ENCODE measurements at regions of chr10 and their contacts with region 1.

Region 1: DNA sequence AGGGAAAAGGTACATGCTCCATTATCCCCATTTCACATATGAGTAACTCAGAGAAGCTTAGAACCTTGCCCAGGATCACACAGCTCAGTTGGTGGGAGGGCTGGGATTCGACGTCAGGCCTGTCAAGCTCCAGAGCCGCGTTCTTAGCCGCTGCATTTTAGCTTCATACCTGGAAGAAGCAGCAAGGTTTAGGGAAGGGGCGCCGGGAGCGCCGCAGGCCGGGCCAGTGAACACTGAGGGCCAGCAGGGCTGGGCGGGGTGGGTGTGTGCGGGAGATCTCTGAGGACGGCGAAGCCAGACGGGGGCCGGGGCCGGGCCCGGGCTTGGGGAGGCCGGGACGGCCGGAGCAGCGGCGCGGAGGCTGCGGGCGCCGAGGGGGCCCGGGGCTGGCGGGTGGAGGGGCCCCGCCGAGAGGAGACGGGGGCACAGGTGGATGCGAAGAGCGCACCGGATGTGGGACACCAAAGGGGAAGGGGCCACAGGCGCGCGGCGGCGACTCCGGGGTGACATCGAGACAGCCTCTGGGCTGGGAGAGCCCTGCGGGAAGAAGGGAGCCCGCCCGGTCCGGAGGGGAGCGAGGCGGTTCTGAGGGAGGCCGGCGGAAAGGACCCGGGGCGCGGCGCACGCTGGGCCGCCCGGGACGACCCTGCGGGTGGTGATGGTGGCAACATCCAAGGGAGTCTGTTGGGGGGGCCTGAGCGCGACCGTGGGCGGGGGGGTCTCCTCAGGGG is 498 bp downstream of the NDST2 start:
- DNase-seq: peak; percentile 63
- H3K4me3 Mint-ChIP-seq: peak overlapping the region; percentile 93
- H3K27ac Mint-ChIP-seq: peak overlapping the region; percentile 99
- H3K4me1 Mint-ChIP-seq: peaks cover 47% of the 10 kb centered on the region
- H3K27me3 Mint-ChIP-seq: no peaks in the 10 kb centered on the region

Region 2: GRCh38 chr10:73252445-73253224 is 558.3 kb before region 1 on chr10 and contains the start of gene MRPS16:
- CTCF ChIA-PET with region 1: no interaction called
- intact Hi-C with region 1: loop called (anchors 2 kb)
- DNase-seq: peak; percentile 97
- H3K4me3 Mint-ChIP-seq: peak within 1 kb of the TSS; percentile 98
- H3K27ac Mint-ChIP-seq: peak within 1 kb of the TSS; percentile 94
- H3K4me1 Mint-ChIP-seq: peaks cover 38% of the 10 kb centered on the region
- H3K27me3 Mint-ChIP-seq: no peaks in the 10 kb centered on the region
- total RNA-seq, gene MRPS16: 140 to 145 TPM

Region 3: DNA sequence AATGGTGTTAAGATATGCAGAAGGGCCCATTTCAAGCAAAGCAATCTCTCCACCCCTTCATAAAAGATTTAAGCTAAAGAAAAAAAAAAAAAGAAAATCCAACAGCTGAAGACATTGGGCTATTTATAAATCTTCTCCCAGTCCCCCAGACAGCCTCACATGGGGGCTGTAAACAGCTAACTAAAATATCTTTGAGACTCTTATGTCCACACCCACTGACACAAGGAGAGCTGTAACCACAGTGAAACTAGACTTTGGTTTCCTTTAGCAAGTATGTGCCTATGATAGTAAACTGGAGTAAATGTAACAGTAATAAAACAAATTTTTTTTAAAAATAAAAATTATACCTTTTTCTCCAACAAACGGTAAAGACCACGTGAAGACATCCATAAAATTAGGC is 343.7 kb before region 1 on chr10:
- CTCF ChIA-PET with region 1: no interaction called
- intact Hi-C with region 1: no loop called
- DNase-seq: no peak
- H3K4me3 Mint-ChIP-seq: no peak overlapping the region
- H3K27ac Mint-ChIP-seq: no peak overlapping the region
- H3K4me1 Mint-ChIP-seq: peaks cover 2% of the 10 kb centered on the region
- H3K27me3 Mint-ChIP-seq: no peaks in the 10 kb centered on the region

Region 4: DNA sequence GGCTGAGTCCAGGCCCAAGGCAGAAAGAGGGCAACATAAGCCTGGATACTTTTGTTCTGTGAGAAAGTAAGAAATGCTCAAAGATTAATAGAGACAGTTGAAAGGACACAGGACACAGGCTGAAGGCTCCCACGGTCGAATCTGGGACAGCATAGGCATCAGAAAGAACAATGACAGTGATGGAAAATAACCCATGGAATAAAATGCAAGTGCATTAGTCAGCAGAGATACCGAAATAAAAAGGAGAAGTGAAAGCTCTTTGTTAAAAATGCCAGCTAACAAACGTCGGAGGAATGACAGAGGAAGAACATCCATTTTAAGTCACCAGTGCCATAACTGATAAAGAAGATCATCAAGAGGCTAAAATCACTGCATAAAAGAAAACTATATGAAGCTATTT is 93.3 kb before region 1 on chr10:
- CTCF ChIA-PET with region 1: no interaction called
- intact Hi-C with region 1: no loop called
- DNase-seq: no peak
- H3K4me3 Mint-ChIP-seq: no peak overlapping the region
- H3K27ac Mint-ChIP-seq: no peak overlapping the region
- H3K4me1 Mint-ChIP-seq: peaks cover 3% of the 10 kb centered on the region
- H3K27me3 Mint-ChIP-seq: no peaks in the 10 kb centered on the region

Region 5: GRCh38 chr10:73785221-73785720 is 25.6 kb before region 1 on chr10 and contains the start of gene ZSWIM8:
- CTCF ChIA-PET with region 1: interaction called, 11 read pairs
- intact Hi-C with region 1: loop called (anchors 1 kb)
- DNase-seq: peak; percentile 89
- H3K4me3 Mint-ChIP-seq: peak within 1 kb of the TSS; percentile 98
- H3K27ac Mint-ChIP-seq: peak within 1 kb of the TSS; percentile 97
- H3K4me1 Mint-ChIP-seq: peaks cover 42% of the 10 kb centered on the region
- H3K27me3 Mint-ChIP-seq: no peaks in the 10 kb centered on the region
- total RNA-seq, gene ZSWIM8: 25.8 to 26.7 TPM

Region 6: DNA sequence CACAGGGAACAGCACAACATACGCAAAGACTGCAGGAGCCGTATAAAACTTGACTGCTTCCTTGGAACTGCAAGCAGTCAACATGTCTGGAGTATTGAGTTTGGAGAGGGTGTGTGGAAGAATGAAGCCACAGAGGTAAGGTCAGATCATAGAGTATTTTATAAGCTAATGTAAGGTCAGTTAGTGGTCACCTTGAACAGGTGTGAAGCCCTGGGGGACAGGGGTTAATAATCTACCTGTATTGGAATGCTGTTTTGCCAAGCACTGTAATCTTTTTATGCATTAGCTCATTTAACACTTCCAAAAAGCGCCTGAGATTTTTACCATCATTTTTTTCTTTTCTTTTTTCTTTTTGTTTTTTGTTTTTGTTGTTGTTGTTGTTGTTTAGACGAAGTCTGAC is 123.2 kb after region 1 on chr10:
- CTCF ChIA-PET with region 1: no interaction called
- intact Hi-C with region 1: no loop called
- DNase-seq: no peak
- H3K4me3 Mint-ChIP-seq: no peak overlapping the region
- H3K27ac Mint-ChIP-seq: no peak overlapping the region
- H3K4me1 Mint-ChIP-seq: peaks cover 15% of the 10 kb centered on the region
- H3K27me3 Mint-ChIP-seq: peaks cover 5% of the 10 kb centered on the region